Activated naive CD4-positive, alpha-beta T cell treated with anti-CD3 and anti-CD28 coated beads for 36 hours (primary cell): ENCODE measurements at regions of chr1 and their contacts with region 1.

Region 1: GRCh38 chr1:76294482-76295194 is 220.1 kb downstream of the ST6GALNAC3 start:
- DNase-seq: peak; percentile 30
- H3K4me3 Mint-ChIP-seq: peak overlapping the region; percentile 49
- H3K27ac Mint-ChIP-seq: peak overlapping the region; percentile 73
- H3K4me1 Mint-ChIP-seq: peaks cover 76% of the 10 kb centered on the region
- H3K27me3 Mint-ChIP-seq: no peaks in the 10 kb centered on the region

Region 2: GRCh38 chr1:76074321-76075187 is 220.1 kb before region 1 on chr1 and contains the start of gene ST6GALNAC3:
- CTCF ChIA-PET with region 1: no interaction called
- intact Hi-C with region 1: loop called (anchors 5 kb)
- DNase-seq: peak; percentile 78
- H3K4me3 Mint-ChIP-seq: peak within 1 kb of the TSS; percentile 83
- H3K27ac Mint-ChIP-seq: no peak within 1 kb of the TSS
- H3K4me1 Mint-ChIP-seq: peaks cover 25% of the 10 kb centered on the region
- H3K27me3 Mint-ChIP-seq: no peaks in the 10 kb centered on the region
- total RNA-seq, gene ST6GALNAC3: 2.5 to 2.8 TPM

Region 3: GRCh38 chr1:76176020-76176419 is 118.6 kb before region 1 on chr1:
- CTCF ChIA-PET with region 1: no interaction called
- intact Hi-C with region 1: loop called (anchors 2 kb)
- DNase-seq: peak; percentile 37
- H3K4me3 Mint-ChIP-seq: no peak overlapping the region
- H3K27ac Mint-ChIP-seq: no peak overlapping the region
- H3K4me1 Mint-ChIP-seq: peaks cover 20% of the 10 kb centered on the region
- H3K27me3 Mint-ChIP-seq: no peaks in the 10 kb centered on the region

Region 4: DNA sequence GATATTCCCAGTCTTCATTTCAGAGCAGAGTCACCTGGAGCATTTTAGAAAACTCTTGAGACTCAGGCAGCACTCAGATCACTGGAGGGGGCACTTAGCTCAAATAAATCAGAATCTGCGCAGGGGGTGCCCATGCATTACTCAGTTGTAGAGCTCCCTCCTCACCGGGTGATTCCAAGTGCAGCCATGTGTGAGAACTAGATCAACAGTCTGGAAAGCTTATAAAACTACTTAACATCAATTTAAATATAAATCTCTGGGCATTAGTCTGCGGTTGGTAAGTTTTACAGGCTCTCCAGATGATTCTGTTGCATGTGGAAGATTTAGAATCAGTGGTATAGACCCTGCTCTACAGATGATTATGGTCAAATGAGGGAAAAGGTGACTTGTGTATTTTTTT is 91.5 kb before region 1 on chr1:
- CTCF ChIA-PET with region 1: no interaction called
- intact Hi-C with region 1: no loop called
- DNase-seq: no peak
- H3K4me3 Mint-ChIP-seq: no peak overlapping the region
- H3K27ac Mint-ChIP-seq: no peak overlapping the region
- H3K4me1 Mint-ChIP-seq: no peaks in the 10 kb centered on the region
- H3K27me3 Mint-ChIP-seq: no peaks in the 10 kb centered on the region

Region 5: GRCh38 chr1:76254104-76255030 is 40.3 kb before region 1 on chr1:
- CTCF ChIA-PET with region 1: interaction called, 8 read pairs
- intact Hi-C with region 1: loop called (anchors 1 kb)
- DNase-seq: peak; percentile 56
- H3K4me3 Mint-ChIP-seq: no peak overlapping the region
- H3K27ac Mint-ChIP-seq: peak overlapping the region; percentile 65
- H3K4me1 Mint-ChIP-seq: peaks cover 68% of the 10 kb centered on the region
- H3K27me3 Mint-ChIP-seq: no peaks in the 10 kb centered on the region

Region 6: GRCh38 chr1:76269155-76269554 is 25.5 kb before region 1 on chr1:
- CTCF ChIA-PET with region 1: interaction called, 6 read pairs
- intact Hi-C with region 1: loop called (anchors 1 kb)
- DNase-seq: peak; percentile 47
- H3K4me3 Mint-ChIP-seq: no peak overlapping the region
- H3K27ac Mint-ChIP-seq: peak overlapping the region; percentile 69
- H3K4me1 Mint-ChIP-seq: peaks cover 60% of the 10 kb centered on the region
- H3K27me3 Mint-ChIP-seq: no peaks in the 10 kb centered on the region

Region 7: DNA sequence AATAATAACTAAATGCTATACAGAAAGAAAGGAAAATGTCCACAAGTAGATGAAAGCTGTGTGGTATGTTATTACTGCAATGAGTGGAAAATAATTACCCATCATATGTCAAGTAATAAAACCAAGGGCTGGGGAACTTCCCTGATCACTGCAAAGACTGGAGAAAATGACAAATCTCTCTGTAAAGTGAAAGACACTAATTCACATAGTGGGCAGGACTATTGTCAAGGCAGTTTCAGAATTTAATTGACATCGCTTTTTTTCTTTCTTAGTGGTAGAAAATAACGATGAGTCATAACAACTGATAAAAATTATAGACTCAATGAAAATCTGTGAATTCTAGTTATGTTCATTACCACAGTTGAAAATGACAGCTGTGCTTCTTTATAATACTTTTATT is 418.9 kb after region 1 on chr1:
- CTCF ChIA-PET with region 1: no interaction called
- intact Hi-C with region 1: loop called (anchors 1 kb)
- DNase-seq: peak; percentile 9
- H3K4me3 Mint-ChIP-seq: no peak overlapping the region
- H3K27ac Mint-ChIP-seq: no peak overlapping the region
- H3K4me1 Mint-ChIP-seq: peaks cover 7% of the 10 kb centered on the region
- H3K27me3 Mint-ChIP-seq: peaks cover 9% of the 10 kb centered on the region

Region 8: GRCh38 chr1:77438236-77438913 is 1143.7 kb after region 1 on chr1:
- CTCF ChIA-PET with region 1: no interaction called
- intact Hi-C with region 1: loop called (anchors 5 kb)
- DNase-seq: no peak
- H3K4me3 Mint-ChIP-seq: peak overlapping the region; percentile 70
- H3K27ac Mint-ChIP-seq: peak overlapping the region; percentile 81
- H3K4me1 Mint-ChIP-seq: peaks cover 28% of the 10 kb centered on the region
- H3K27me3 Mint-ChIP-seq: no peaks in the 10 kb centered on the region